Panc1 (cell line): ENCODE measurements at regions of chr12 and their contacts with region 1.

Region 1: DNA sequence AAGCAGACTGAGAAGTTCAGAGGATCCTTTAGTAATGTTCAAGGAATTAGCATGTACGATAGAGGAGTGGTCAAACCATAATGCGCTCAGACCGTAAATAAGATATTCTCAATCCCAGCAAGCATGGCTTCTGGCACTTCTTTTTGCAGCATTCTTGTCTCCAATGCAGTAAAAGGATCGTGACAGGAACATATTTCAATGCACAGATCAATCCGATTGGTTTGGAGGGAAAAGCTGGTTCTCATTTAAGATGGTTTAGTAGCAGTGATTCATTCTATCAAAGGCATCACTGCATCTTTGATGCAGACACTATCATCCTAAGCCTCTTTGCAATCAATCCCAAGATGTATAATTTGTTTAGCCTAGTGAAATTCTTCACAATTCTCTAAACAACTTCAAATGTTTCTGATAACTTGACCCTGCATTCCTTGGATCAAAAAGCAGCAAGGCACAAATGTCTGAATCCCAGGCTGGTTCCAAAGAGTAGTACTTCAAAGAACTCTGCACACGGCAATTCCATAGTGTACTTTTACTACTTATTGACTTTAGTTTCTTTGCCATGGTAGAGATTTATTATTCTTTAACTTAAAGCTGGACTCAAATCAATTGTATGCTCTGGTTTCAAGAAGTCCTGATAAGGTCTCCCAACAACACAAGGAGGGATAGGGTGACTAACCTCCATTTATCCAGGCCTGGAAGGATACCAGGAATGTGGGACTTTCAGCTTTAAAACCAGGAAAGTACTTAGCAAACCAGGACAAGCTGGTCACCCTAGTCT is 96.8 kb upstream of the MDM1 start:
- DNase-seq: no peak
- ATAC-seq: peak; percentile 75
- H3K4me3 ChIP-seq: no peak overlapping the region
- H3K27ac ChIP-seq: peak overlapping the region; percentile 95
- H3K4me1 ChIP-seq: peaks cover 35% of the 10 kb centered on the region
- H3K27me3 ChIP-seq: no peaks in the 10 kb centered on the region
- CTCF ChIP-seq: no peak

Region 2: DNA sequence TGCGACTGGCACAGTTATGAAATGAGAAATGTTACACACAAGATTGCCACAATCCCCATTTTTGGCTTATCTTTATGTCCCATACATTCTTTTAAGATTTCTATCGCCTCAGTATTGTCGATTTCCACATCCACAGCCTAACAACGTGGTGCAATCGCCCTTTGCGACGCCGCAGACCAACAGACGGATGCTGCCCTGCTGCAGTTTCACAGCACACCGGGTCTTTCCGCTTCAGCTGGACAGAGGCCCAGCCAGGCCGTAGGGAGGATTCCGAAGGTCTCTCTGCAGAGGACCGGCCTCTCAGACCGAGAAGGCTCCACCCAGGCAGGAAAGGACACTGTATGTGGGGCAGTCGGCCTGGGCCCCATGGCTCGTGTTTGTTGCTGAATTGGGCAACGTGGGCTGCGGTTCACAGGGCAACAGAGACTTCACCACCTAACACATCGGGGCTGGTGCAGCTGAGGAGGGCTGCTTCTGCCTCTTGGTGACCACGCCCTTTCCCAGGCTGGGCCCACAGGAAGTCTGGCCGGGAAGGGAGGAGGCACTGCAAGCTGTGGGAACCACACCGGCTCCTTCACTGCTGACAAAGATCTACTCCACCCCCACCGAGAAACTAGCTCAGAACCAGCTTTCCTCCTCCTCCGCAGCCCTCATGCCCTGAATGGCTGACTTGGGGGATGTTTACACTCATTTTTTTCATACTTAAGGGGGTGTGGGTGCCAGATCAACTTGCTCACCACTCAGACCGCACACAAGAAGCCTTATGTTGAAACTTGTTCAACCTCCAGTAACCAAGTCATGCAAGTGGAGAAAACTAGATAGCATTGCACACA is 63.8 kb before region 1 on chr12:
- CTCF ChIA-PET with region 1: no interaction called
- POLR2A ChIA-PET with region 1: no interaction called
- in situ Hi-C with region 1: no loop called
- intact Hi-C with region 1: loop called (anchors 2 kb)
- DNase-seq: peak; percentile 72
- ATAC-seq: peak; percentile 99
- H3K4me3 ChIP-seq: peak overlapping the region; percentile 41 to 65
- H3K27ac ChIP-seq: peak overlapping the region; percentile 98
- H3K4me1 ChIP-seq: peaks cover 28% of the 10 kb centered on the region
- H3K27me3 ChIP-seq: no peaks in the 10 kb centered on the region
- CTCF ChIP-seq: no peak